T-cell (primary cell): ENCODE measurements at regions of chr6 and their contacts with region 1.

Region 1: GRCh38 chr6:30571075-30571768 is at the start of gene ABCF1:
- DNase-seq: peak; percentile 97 to 100 (median 99)
- ATAC-seq: peak; percentile 94 to 98 (median 96)
- H3K4me3 ChIP-seq: peak within 1 kb of the TSS; percentile 71 to 92
- H3K4me3 Mint-ChIP-seq: peak within 1 kb of the TSS; percentile 97 to 100 (median 98)
- H3K27ac ChIP-seq: peak within 1 kb of the TSS; percentile 87
- H3K27ac Mint-ChIP-seq: peak within 1 kb of the TSS; percentile 98 to 99
- H3K4me1 ChIP-seq: peaks cover 27 to 43% of the 10 kb centered on the region in 2 experiments
- H3K4me1 Mint-ChIP-seq: peaks cover 62 to 69% (median 66%) of the 10 kb centered on the region in 3 donors
- H3K27me3 ChIP-seq: no peaks in the 10 kb centered on the region
- H3K27me3 Mint-ChIP-seq: no peaks in the 10 kb centered on the region
- total RNA-seq, gene ABCF1: 61.1 to 89.9 (median 73.8) TPM

Region 2: GRCh38 chr6:30556066-30556905 is 14.9 kb before region 1 on chr6 and contains the start of gene GNL1:
- CTCF ChIA-PET with region 1: interaction called in 1 of 2 experiments, 4 read pairs
- POLR2A ChIA-PET with region 1: interaction called, 7 to 21 read pairs
- DNase-seq: peak; percentile 96 to 99 (median 99)
- ATAC-seq: peak; percentile 87 to 93 (median 92)
- H3K4me3 ChIP-seq: peak within 1 kb of the TSS; percentile 95 to 97
- H3K4me3 Mint-ChIP-seq: peak within 1 kb of the TSS; percentile 98 to 100 (median 98)
- H3K27ac ChIP-seq: peak within 1 kb of the TSS; percentile 98
- H3K27ac Mint-ChIP-seq: peak within 1 kb of the TSS; percentile 99 to 100
- H3K4me1 ChIP-seq: peaks cover 19 to 28% of the 10 kb centered on the region in 2 experiments
- H3K4me1 Mint-ChIP-seq: peaks cover 50 to 51% (median 51%) of the 10 kb centered on the region in 3 donors
- H3K27me3 ChIP-seq: no peaks in the 10 kb centered on the region
- H3K27me3 Mint-ChIP-seq: no peaks in the 10 kb centered on the region
- total RNA-seq, gene GNL1: 65.5 to 167 (median 72.9) TPM

Region 3: DNA sequence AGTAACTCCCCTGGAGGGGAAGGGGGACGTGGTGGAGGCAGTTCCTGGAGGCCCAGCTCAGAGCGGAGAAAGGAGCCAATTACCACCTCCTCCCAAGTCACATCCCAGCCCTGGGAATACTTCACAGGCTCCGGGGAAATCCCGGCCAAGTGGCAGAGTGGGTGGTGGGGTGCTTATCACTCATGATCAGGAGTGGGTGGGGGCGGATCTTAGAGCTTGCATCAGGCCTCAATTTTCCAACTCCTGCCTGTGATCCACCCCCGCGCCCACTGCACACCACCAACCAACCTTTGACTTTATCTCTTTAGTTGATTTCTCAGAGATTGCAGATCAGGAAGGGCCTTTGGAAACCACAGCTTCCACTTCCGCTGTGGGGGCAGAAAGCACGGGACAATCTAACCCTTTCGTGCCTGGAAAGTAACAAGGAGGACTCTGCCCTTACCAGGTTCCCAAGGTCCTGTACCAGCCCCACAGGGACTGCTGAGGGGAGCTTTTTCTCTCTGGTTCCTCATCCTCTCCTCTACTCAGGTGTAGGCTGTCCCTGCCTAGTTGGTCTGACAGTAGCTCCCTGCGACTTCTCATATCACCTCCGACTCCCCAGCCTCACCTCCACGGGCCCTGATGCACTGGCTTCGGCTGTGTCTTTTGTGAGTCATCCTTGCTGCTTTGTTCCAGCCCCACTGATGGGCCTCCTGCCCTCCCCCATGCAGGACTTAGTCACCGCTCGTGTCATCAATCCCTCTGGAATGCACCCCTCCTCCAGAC is 198.0 kb after region 1 on chr6:
- CTCF ChIA-PET with region 1: no interaction called
- POLR2A ChIA-PET with region 1: no interaction called
- DNase-seq: peak in 34 of 35 experiments; percentile 12 to 69 (median 28)
- ATAC-seq: peak; percentile 89 to 97 (median 92)
- H3K4me3 ChIP-seq: peak overlapping the region in 1 of 2 donors; percentile 48
- H3K4me3 Mint-ChIP-seq: peak overlapping the region; percentile 53 to 81 (median 56)
- H3K27ac ChIP-seq: no peak overlapping the region
- H3K27ac Mint-ChIP-seq: peak overlapping the region; percentile 81 to 84
- H3K4me1 ChIP-seq: peaks cover 31 to 43% of the 10 kb centered on the region in 2 experiments
- H3K4me1 Mint-ChIP-seq: peaks cover 63 to 71% (median 70%) of the 10 kb centered on the region in 3 donors
- H3K27me3 ChIP-seq: no peaks in the 10 kb centered on the region
- H3K27me3 Mint-ChIP-seq: peaks cover 0 to 2% of the 10 kb centered on the region in 2 donors